ENCODE measurements at regions of chr15 and their contacts with region 1.

Region 1: DNA sequence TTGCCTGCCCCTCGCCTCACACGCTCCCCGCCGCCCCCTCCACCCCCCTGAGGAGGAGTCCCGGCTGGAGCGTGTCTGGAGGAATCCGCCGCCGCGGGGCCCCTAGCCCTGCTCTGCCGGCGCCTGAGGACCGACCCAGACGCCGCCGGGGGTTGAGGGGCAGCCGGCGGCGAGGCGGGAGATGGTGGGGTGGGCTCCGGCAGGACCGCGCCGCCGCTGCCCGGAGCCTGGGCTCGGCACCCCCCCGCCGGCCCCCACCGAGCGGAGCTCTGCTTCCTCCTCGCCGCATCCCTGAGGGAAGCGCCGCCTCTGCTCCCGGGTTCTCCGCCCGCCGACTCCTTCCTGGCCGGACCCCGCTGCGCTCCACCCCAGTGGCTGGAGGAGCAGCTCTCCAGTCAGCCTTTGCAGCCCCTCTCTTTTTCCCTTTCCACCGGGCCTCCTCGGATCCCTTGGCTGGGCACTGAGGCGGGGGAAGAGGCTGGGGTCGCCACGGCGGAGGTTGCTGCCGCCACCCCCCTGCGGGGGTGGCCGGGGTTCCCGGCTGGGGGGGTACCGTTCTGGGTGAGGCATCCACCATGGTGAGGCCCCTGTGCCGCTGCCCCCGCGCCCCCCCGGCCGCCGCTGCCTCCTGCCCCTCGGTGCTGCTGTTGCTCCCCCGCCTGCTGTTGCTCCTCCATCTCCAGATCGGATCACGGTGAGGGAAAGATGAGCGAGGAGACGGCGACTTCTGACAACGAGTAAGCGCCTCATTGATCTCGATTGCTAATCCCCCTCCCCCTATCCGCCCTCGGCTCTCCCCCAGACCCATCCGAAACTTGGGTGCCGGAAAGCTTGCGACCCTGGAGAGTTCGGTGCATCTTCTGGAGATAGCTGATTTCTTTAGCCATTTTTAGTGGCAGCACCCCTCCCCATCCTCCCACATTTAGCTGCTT is at the start of gene SPRED1:
- DNase-seq: no peak
- H3K4me3 ChIP-seq: peak within 1 kb of the TSS; percentile 93
- H3K27ac ChIP-seq: peak within 1 kb of the TSS; percentile 94
- H3K27me3 ChIP-seq: no peaks in the 10 kb centered on the region
- CTCF ChIP-seq: no peak
- polyA plus RNA-seq, gene SPRED1: 10.7 and 15.1 TPM in 2 replicates

Region 2: GRCh38 chr15:38129531-38130204 is 123.1 kb before region 1 on chr15:
- CTCF ChIA-PET with region 1: no interaction called
- POLR2A ChIA-PET with region 1: interaction called, 29 read pairs
- DNase-seq: peak; percentile 98
- H3K4me3 ChIP-seq: peak overlapping the region; percentile 52
- H3K27ac ChIP-seq: peak overlapping the region; percentile 89
- H3K27me3 ChIP-seq: no peaks in the 10 kb centered on the region
- CTCF ChIP-seq: no peak

Region 3: DNA sequence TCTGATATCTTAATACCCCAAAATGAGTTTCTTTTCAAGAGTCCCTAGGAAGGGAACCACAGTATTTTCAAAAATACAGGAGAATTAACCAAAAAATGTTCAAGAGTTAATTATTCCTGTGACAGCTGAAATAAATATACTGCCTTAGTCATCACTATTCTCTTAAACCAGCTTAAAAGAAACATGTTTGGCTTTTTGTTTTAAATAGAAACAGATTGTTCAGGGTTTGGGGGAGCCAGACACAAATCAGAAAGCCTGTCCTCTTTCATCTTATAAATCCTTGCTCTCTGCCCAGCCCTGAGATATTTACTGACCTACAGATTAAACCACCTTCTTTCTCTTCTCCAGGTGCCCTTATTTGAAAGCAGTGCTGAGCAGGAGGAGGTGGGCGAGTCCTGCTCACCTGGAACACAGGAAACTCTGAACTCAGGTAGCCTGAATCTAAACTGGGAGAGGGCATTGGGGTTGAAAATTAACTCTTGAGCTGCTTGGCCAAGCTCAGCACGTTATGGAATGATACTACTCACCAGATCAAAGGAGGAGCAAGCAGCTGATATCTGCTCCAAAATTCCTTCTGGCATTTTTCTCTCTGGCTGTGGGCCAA is 84.2 kb before region 1 on chr15:
- CTCF ChIA-PET with region 1: no interaction called
- POLR2A ChIA-PET with region 1: interaction called, 10 read pairs
- DNase-seq: no peak
- H3K4me3 ChIP-seq: no peak overlapping the region
- H3K27ac ChIP-seq: no peak overlapping the region
- H3K27me3 ChIP-seq: peaks cover 11% of the 10 kb centered on the region
- CTCF ChIP-seq: no peak

Region 4: DNA sequence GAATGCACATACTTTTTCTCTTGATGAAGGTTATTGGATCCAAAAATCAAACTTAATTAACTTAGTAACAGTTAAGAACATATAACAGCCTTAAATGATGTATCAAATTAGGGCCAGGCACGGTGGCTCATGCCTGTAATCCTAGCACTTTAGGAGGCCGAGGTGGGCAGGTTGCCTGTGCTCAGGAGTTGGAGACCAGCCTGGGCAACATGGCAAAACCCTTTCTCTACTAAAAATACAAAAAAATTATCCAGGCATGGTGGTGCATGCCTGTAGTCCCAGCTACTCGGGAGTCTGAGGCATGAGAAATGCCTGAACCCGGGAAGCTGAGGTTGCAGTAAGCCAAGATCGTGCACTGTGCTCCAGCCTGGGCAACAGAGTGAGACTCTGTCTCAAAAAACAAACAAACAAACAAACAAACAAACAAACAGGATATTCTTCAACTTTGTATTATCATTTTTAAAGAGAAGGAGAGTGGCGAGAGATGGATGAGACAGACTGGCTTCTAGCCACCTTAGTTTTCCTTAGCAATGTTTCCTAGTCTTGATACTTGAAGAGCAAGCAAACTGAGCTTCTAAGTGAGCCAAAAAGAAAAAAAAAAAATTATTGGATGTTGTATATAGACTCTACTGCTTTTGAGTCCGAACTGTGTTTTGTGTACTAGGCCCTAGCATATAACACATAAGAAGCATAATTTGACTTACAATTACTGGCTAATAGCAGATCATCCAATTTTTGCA is 13.7 kb after region 1 on chr15:
- CTCF ChIA-PET with region 1: no interaction called
- POLR2A ChIA-PET with region 1: interaction called, 11 read pairs
- DNase-seq: no peak
- H3K4me3 ChIP-seq: peak overlapping the region; percentile 31
- H3K27ac ChIP-seq: no peak overlapping the region
- H3K27me3 ChIP-seq: no peaks in the 10 kb centered on the region
- CTCF ChIP-seq: no peak

Region 5: GRCh38 chr15:38308797-38309196 is 56.0 kb after region 1 on chr15:
- CTCF ChIA-PET with region 1: no interaction called
- POLR2A ChIA-PET with region 1: no interaction called
- DNase-seq: no peak
- H3K4me3 ChIP-seq: no peak overlapping the region
- H3K27ac ChIP-seq: no peak overlapping the region
- H3K27me3 ChIP-seq: no peaks in the 10 kb centered on the region
- CTCF ChIP-seq: no peak

Region 6: DNA sequence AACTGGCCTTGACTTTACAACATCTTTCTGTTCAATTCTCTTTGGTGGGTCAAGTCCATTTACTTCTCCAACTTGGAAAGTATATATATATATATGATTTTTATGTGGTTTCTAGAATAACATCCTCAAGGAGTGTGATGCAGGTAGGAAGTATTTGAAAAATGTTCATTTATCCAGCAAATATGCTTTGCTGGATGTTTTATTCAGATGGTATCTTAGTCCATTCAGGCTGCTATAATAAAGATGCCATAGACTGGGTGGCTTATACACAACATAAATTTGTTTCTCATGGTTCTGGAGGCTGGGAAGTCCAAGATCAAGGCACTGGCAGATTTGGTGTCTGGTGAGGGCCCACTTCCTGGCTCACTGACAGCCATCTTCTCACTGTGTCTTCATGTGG is 480.6 kb after region 1 on chr15:
- CTCF ChIA-PET with region 1: no interaction called
- POLR2A ChIA-PET with region 1: no interaction called
- DNase-seq: no peak
- H3K4me3 ChIP-seq: no peak overlapping the region
- H3K27ac ChIP-seq: no peak overlapping the region
- H3K27me3 ChIP-seq: no peaks in the 10 kb centered on the region
- CTCF ChIP-seq: no peak